OCI-LY7 (cell line): ENCODE measurements at regions of chr12 and their contacts with region 1.

Region 1: GRCh38 chr12:128259556-128260070 is 7.4 kb upstream of the TMEM132C start:
- DNase-seq: peak; percentile 33
- H3K4me3 ChIP-seq: no peak overlapping the region
- H3K27ac ChIP-seq: no peak overlapping the region
- H3K4me1 ChIP-seq: no peaks in the 10 kb centered on the region
- CTCF ChIP-seq: peak; percentile 90

Region 2: DNA sequence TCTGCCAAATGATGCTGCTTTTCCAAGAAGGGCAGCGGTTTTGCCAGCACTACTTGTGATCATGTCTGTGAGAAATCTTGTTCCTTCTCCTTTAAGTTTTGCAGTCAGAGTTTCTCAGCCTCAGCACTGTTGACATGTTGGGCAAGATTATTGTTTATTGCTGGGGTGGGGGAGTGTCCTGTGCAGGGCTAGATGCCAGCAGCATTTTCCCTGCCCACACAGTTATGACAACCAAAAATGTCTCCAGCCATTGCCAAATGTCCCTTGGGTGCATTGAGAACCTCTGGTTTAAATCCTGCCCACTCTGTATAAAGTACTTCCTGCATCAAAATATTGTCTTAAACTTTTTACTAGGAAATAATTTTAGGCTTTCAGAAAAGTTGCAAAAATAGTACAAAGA is 27.4 kb after region 1 on chr12:
- CTCF ChIA-PET with region 1: no interaction called
- POLR2A ChIA-PET with region 1: no interaction called
- intact Hi-C with region 1: no loop called
- DNase-seq: no peak
- H3K4me3 ChIP-seq: no peak overlapping the region
- H3K27ac ChIP-seq: no peak overlapping the region
- H3K4me1 ChIP-seq: no peaks in the 10 kb centered on the region
- CTCF ChIP-seq: no peak

Region 3: GRCh38 chr12:128387811-128388422 is 128.3 kb after region 1 on chr12:
- CTCF ChIA-PET with region 1: no interaction called
- POLR2A ChIA-PET with region 1: no interaction called
- intact Hi-C with region 1: loop called (anchors 10 kb)
- DNase-seq: peak; percentile 25
- H3K4me3 ChIP-seq: no peak overlapping the region
- H3K27ac ChIP-seq: no peak overlapping the region
- H3K4me1 ChIP-seq: no peaks in the 10 kb centered on the region
- CTCF ChIP-seq: peak; percentile 74